Dorsolateral prefrontal cortex (tissue), 120 donors: ENCODE measurements at regions of chr3 and their contacts with region 1.

Region 1: GRCh38 chr3:14947886-14948555 is 638 bp downstream of the NR2C2 start:
- DNase-seq: peak; percentile 97 to 99 (median 98)
- H3K4me3 ChIP-seq: peak overlapping the region; percentile 65 to 98 (median 91)
- H3K27ac ChIP-seq: peak overlapping the region; percentile 95 to 100 (median 100)
- H3K27me3 ChIP-seq: no peaks in the 10 kb centered on the region
- CTCF ChIP-seq: peak in 2 of 56 donors; percentile 4 to 13

Region 2: GRCh38 chr3:15098503-15099363 is 150.7 kb after region 1 on chr3 and contains the start of gene RBSN:
- intact Hi-C with region 1: loop called (anchors 5 to 10 kb)
- DNase-seq: peak; percentile 92 to 97 (median 96)
- H3K4me3 ChIP-seq: peak within 1 kb of the TSS; percentile 70 to 99 (median 90)
- H3K27ac ChIP-seq: peak within 1 kb of the TSS in 57 of 59 donors; percentile 27 to 95 (median 87)
- H3K27me3 ChIP-seq: no peaks in the 10 kb centered on the region
- CTCF ChIP-seq: peak in 27 of 56 donors; percentile 11 to 52 (median 32)
- total RNA-seq, gene RBSN: 39.4 to 74.3 (median 61.4) TPM